ENCODE measurements at regions of chr12 and their contacts with region 1.

Region 1: GRCh38 chr12:25130741-25131188 is 64.2 kb downstream of the DNAI7 start:
- DNase-seq: no peak
- ATAC-seq: no peak
- H3K4me3 ChIP-seq: no peak overlapping the region
- H3K4me1 ChIP-seq: no peaks in the 10 kb centered on the region
- CTCF ChIP-seq: no peak

Region 2: DNA sequence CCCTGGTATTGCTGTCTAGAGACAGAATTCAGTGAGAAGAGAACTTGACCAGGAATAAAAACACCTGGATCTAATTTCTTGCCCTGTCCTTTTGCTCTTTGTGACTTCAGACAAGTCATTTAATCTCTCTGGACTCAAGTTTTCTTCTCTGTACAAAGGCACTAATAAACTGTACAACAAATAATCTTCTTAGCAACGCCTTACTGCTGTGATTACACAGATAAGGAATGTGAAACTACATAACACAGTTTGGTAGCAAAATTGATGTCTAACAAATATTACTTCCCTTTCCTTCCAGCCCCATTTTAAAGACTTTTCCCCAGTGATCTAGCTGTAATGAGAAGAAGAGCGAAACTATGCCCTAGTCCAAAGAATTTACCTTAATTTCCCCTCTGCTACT is 251.1 kb before region 1 on chr12:
- intact Hi-C with region 1: no loop called
- DNase-seq: no peak
- ATAC-seq: no peak
- H3K4me3 ChIP-seq: no peak overlapping the region
- H3K4me1 ChIP-seq: no peaks in the 10 kb centered on the region
- CTCF ChIP-seq: no peak

Region 3: GRCh38 chr12:24991209-24992049 is 139.3 kb before region 1 on chr12:
- intact Hi-C with region 1: loop called in 1 of 2 experiments (anchors 2 kb)
- DNase-seq: peak in 1 of 3 donors; percentile 24
- ATAC-seq: peak; percentile 78
- H3K4me3 ChIP-seq: no peak overlapping the region
- H3K4me1 ChIP-seq: no peaks in the 10 kb centered on the region
- CTCF ChIP-seq: no peak

Region 4: GRCh38 chr12:25074954-25075353 is 55.8 kb before region 1 on chr12:
- intact Hi-C with region 1: no loop called
- DNase-seq: no peak
- ATAC-seq: no peak
- H3K4me3 ChIP-seq: no peak overlapping the region
- H3K4me1 ChIP-seq: no peaks in the 10 kb centered on the region
- CTCF ChIP-seq: no peak

Measured in mucosa of descending colon (tissue), 3 donors.